ENCODE measurements at regions of chr11 and their contacts with region 1.

Region 1: GRCh38 chr11:129364143-129364654 is 11.4 kb upstream of the BARX2 start:
- DNase-seq: peak; percentile 94
- H3K4me3 Mint-ChIP-seq: no peak overlapping the region
- H3K27ac Mint-ChIP-seq: no peak overlapping the region
- H3K4me1 Mint-ChIP-seq: no peaks in the 10 kb centered on the region
- H3K27me3 Mint-ChIP-seq: peaks cover 51% of the 10 kb centered on the region

Region 2: DNA sequence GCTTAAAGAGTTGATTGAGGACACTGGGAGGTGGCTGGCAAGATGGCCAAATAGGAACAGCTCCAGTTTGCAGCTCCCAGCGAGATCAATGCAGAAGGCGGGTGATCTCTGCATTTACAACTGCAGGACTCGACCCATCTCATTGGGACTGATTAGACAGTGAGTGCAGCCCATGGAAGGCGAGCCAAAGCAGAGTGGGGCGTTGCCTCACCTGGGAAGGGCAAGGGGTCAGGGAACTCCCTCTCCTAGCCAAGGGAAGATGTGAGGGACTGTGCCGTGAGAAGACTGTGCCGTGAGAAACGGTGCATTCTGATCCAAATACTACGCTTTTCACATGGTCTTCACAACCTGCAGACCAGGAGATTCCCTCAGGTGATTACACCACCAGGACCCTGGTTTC is 208.5 kb before region 1 on chr11:
- intact Hi-C with region 1: no loop called
- DNase-seq: no peak
- H3K4me3 Mint-ChIP-seq: no peak overlapping the region
- H3K27ac Mint-ChIP-seq: no peak overlapping the region
- H3K4me1 Mint-ChIP-seq: no peaks in the 10 kb centered on the region
- H3K27me3 Mint-ChIP-seq: no peaks in the 10 kb centered on the region

Region 3: GRCh38 chr11:129375751-129376657 is 11.8 kb after region 1 on chr11 and contains the start of gene BARX2:
- intact Hi-C with region 1: loop called (anchors 1 kb)
- DNase-seq: peak; percentile 80
- H3K4me3 Mint-ChIP-seq: peak within 1 kb of the TSS; percentile 86
- H3K27ac Mint-ChIP-seq: peak within 1 kb of the TSS; percentile 52
- H3K4me1 Mint-ChIP-seq: peaks cover 26% of the 10 kb centered on the region
- H3K27me3 Mint-ChIP-seq: peaks cover 72% of the 10 kb centered on the region
- total RNA-seq, gene BARX2: 4.1 and 4.7 TPM in 2 replicates

Region 4: DNA sequence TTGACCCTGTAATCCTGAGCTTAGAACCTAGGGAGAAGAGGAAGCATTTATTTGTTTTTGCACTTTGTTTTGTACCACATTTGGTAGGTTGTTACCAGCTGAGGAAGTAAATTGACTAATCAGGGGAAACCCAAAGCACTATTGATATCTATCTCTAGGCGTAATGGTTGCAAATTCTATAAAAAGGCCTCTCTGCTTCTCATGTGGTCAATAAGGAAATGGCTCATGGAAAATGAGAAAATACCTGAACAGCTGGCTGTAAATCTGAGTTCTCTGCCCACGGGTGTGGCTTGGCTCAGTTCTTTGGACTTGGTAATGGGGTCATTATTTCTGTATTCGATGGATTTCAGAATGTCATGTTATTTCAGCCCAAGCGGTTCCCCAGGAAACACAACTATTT is 53.8 kb after region 1 on chr11:
- intact Hi-C with region 1: no loop called
- DNase-seq: peak; percentile 57
- H3K4me3 Mint-ChIP-seq: no peak overlapping the region
- H3K27ac Mint-ChIP-seq: peak overlapping the region; percentile 35
- H3K4me1 Mint-ChIP-seq: peaks cover 23% of the 10 kb centered on the region
- H3K27me3 Mint-ChIP-seq: no peaks in the 10 kb centered on the region

Region 5: DNA sequence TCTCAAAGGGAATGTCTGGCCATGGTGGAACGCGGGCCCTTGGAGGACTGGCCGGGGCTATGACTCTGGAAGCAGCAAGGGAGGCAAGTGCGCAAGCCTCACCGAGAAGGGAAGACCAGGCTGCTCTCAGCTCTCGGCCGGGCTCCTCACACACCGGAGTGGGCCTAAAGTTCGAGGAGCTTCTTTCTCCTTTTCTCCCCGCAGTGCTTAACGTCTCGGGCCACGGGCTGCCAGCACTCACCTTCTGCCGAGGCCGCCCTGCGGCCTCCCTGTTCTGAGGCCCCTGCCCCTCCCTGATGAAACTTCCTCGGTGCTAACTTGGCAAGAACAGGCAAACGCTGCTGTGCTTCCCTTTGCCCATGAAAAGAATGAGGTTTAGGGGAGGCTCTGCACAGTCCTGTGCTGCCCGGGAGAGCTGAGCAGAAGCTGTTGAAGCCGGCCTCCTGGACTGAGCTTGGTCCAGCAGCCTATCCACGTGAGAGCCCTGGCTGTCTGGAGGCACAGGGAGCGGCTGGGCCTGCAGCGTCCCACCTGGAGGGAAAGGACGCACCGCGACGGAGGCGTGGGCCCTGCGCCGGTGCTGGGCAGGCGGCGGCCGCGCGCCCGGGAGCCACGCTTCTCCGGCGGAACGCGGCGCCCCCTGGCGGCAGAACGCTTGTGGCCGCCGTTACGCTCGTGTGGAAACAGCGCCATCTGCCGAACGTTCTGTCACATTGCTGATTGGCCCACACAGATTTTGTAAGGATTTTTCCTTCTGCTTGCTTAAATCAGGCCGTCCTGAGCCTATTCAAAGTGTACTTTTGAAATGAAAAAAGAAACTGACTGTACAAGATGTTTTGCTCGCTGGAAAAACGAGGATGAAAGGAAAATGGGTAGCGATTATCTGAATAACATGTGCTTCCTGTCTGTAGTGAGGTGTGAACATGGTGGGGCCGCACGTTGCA is 386.4 kb after region 1 on chr11:
- intact Hi-C with region 1: loop called (anchors 1 kb)
- DNase-seq: peak; percentile 94
- H3K4me3 Mint-ChIP-seq: no peak overlapping the region
- H3K27ac Mint-ChIP-seq: no peak overlapping the region
- H3K4me1 Mint-ChIP-seq: peaks cover 2% of the 10 kb centered on the region
- H3K27me3 Mint-ChIP-seq: peaks cover 16% of the 10 kb centered on the region